CD14-positive monocyte (primary cell): ENCODE measurements at regions of chr11 and their contacts with region 1.

Region 1: DNA sequence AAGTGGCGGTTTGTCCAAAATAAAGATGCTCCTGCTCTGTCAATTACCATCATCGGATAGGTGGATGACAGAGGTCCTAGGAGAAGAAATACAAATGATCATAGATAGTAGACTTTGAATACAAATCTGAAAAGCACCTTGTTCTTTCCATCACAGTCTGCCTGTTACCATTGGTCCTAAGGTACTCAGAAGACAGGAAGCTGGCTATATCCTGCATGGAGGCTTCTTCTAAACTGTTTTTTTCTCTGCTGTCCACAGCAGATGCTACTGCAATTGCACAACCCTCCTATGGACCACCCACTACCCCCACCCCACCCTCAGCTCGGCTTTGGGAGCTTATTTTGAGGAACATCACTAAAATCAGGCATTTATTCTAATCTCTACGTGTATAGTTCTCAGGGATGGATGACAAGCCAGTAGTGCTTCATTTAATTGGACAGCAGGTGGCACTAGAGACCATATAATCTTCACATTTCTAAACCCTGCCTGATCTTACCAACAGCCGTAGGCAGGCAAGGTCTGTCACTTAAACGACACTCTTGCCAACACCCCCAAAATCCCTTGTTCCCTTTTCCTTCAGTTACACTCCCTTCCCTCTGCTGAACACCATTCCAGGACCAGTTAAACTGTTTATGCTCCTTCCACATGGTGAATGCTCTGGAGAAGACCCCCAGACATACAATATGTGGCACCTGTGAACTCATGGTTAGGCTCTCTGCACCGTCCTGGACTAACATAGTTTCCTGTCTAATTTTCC is 6.6 kb upstream of the PTS start:
- DNase-seq: peak; percentile 73 to 82 (median 77)
- H3K4me3 ChIP-seq: no peak overlapping the region
- H3K4me3 Mint-ChIP-seq: peak overlapping the region in 1 of 2 donors; percentile 44
- H3K27ac ChIP-seq: no peak overlapping the region
- H3K27ac Mint-ChIP-seq: peak overlapping the region in 2 of 7 donors; percentile 31 to 33
- H3K4me1 ChIP-seq: peaks cover 3 to 5% of the 10 kb centered on the region in 2 donors
- H3K4me1 Mint-ChIP-seq: peaks cover 14% of the 10 kb centered on the region
- H3K27me3 ChIP-seq: no peaks in the 10 kb centered on the region
- H3K27me3 Mint-ChIP-seq: peaks cover 0 to 2% (median 0%) of the 10 kb centered on the region in 3 donors
- CTCF ChIP-seq: peak; percentile 78

Region 2: GRCh38 chr11:112174789-112175598 is 44.7 kb before region 1 on chr11 and contains the start of gene BCO2:
- intact Hi-C with region 1: loop called in 1 of 2 experiments (anchors 10 kb)
- DNase-seq: peak; percentile 88 to 92 (median 91)
- H3K4me3 ChIP-seq: peak within 1 kb of the TSS in 2 of 3 experiments; percentile 3 to 49
- H3K4me3 Mint-ChIP-seq: peak within 1 kb of the TSS; percentile 67 to 85
- H3K27ac ChIP-seq: peak within 1 kb of the TSS; percentile 7 to 54
- H3K27ac Mint-ChIP-seq: peak within 1 kb of the TSS; percentile 82 to 90 (median 86)
- H3K4me1 ChIP-seq: peaks cover 30 to 31% of the 10 kb centered on the region in 2 donors
- H3K4me1 Mint-ChIP-seq: peaks cover 34% of the 10 kb centered on the region
- H3K27me3 ChIP-seq: no peaks in the 10 kb centered on the region
- H3K27me3 Mint-ChIP-seq: peaks cover 0 to 2% (median 1%) of the 10 kb centered on the region in 3 donors
- CTCF ChIP-seq: peak; percentile 100
- polyA plus RNA-seq, gene BCO2: 0.20 to 1.9 TPM in 2 of 3 donors, not detected in the other

Region 3: DNA sequence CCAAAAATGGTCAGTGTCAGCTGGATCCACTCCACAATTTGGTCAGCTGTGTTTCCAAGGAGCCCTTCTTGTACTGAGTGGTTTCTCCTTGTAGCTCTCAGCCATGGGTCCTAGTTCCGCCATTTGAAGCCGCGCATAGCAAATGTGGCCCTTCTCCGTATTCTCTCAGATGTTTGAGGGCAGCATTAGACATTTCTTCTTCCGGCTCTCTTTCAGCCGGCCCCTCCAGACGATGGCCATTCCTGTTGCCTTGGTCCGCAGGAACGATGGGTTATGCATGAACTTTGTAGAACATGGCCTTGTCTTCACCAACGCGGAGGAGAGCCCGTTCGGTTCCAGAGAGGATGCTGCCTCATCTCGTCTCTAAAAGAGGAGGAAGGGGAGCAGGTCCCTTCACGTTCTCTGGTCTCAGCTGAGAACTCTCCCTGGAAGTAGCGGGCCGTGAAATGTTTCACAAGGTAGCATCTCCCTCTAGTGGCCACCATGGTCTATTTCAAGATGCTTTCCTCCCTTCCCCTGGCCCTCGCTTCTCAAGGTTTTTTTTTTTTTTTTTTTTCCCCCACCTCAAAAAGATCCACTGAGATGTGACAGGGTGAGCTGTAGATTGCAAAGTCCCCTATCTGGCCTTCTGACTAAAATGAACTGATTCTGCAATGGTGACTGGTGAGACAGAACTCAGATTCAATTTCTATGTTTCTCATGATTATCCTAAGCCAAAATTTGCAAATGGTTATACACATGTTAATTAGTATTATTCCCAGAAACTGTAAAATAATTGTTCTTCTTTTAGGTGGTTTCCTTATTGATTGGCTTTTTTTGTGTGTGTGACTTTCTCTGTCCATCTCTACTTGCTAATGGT is 60.8 kb after region 1 on chr11:
- intact Hi-C with region 1: loop called (anchors 1 to 2 kb)
- DNase-seq: peak; percentile 69 to 82 (median 76)
- H3K4me3 ChIP-seq: peak overlapping the region; percentile 44 to 85 (median 49)
- H3K4me3 Mint-ChIP-seq: peak overlapping the region; percentile 87 to 95
- H3K27ac ChIP-seq: peak overlapping the region in 1 of 2 donors; percentile 33
- H3K27ac Mint-ChIP-seq: peak overlapping the region in 4 of 7 donors; percentile 57 to 79 (median 70)
- H3K4me1 ChIP-seq: peaks cover 13 to 21% of the 10 kb centered on the region in 2 donors
- H3K4me1 Mint-ChIP-seq: peaks cover 33% of the 10 kb centered on the region
- H3K27me3 ChIP-seq: no peaks in the 10 kb centered on the region
- H3K27me3 Mint-ChIP-seq: peaks cover 0 to 4% (median 2%) of the 10 kb centered on the region in 3 donors
- CTCF ChIP-seq: peak; percentile 65

Region 4: GRCh38 chr11:112555491-112556364 is 336.1 kb after region 1 on chr11:
- intact Hi-C with region 1: loop called (anchors 5 to 10 kb)
- DNase-seq: peak; percentile 17 to 50 (median 22)
- H3K4me3 ChIP-seq: no peak overlapping the region
- H3K4me3 Mint-ChIP-seq: no peak overlapping the region
- H3K27ac ChIP-seq: no peak overlapping the region
- H3K27ac Mint-ChIP-seq: no peak overlapping the region
- H3K4me1 ChIP-seq: no peaks in the 10 kb centered on the region
- H3K4me1 Mint-ChIP-seq: peaks cover 3% of the 10 kb centered on the region
- H3K27me3 ChIP-seq: no peaks in the 10 kb centered on the region
- H3K27me3 Mint-ChIP-seq: peaks cover 0 to 3% (median 0%) of the 10 kb centered on the region in 3 donors
- CTCF ChIP-seq: peak; percentile 80

Region 5: DNA sequence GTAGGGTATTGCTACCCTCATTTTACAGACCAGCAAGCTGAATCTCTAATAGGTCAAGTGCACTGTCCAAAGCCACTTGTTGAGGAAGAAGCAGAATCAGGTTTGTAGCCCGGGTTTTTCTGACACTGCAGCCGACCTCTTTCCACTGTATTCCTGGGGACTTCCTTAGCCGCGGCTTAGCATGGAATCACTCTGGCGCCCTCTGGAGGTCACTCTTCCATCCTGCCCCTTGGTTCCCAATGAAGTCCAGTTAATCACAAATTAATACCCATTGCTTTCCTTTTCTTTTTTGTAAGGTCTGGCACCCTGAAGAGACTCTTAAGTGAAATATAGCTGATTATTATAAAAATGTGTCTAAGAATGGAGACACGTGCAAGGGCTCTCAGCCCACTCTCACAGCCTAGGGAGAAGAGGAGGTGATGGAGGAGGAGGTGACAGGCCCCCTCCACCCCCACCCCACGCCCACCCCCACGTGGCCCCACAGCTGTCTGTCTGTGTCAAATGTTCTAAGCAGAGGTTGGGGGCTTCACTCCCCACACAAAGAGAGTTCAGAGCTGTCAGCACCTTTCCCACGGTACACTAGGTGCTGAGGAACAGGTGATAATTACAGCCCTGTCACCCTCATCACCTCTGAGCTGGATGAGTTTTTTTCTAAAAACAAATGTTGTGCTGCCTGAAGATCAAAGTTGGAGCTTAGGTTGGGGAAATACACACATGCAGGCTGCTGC is 1313.2 kb after region 1 on chr11:
- intact Hi-C with region 1: loop called in 1 of 2 experiments (anchors 10 kb)
- DNase-seq: peak; percentile 29 to 63 (median 57)
- H3K4me3 ChIP-seq: no peak overlapping the region
- H3K4me3 Mint-ChIP-seq: no peak overlapping the region
- H3K27ac ChIP-seq: no peak overlapping the region
- H3K27ac Mint-ChIP-seq: no peak overlapping the region
- H3K4me1 ChIP-seq: no peaks in the 10 kb centered on the region
- H3K4me1 Mint-ChIP-seq: no peaks in the 10 kb centered on the region
- H3K27me3 ChIP-seq: no peaks in the 10 kb centered on the region
- H3K27me3 Mint-ChIP-seq: peaks cover 7 to 12% (median 8%) of the 10 kb centered on the region in 3 donors
- CTCF ChIP-seq: peak; percentile 87